ENCODE measurements at regions of chr20 and their contacts with region 1.

Region 1: GRCh38 chr20:38073307-38074071 is 39.9 kb downstream of the RPRD1B start:
- DNase-seq: peak; percentile 98
- H3K4me3 ChIP-seq: no peak overlapping the region
- CTCF ChIP-seq: peak; percentile 78

Region 2: GRCh38 chr20:38127011-38127621 is 53.6 kb after region 1 on chr20:
- in situ Hi-C with region 1: loop called (anchors 5 kb)
- DNase-seq: peak; percentile 55
- H3K4me3 ChIP-seq: no peak overlapping the region
- CTCF ChIP-seq: no peak

Region 3: GRCh38 chr20:38165089-38165989 is 91.8 kb after region 1 on chr20 and contains the start of gene TGM2:
- in situ Hi-C with region 1: loop called (anchors 5 kb)
- DNase-seq: no peak
- H3K4me3 ChIP-seq: peak within 1 kb of the TSS; percentile 51
- CTCF ChIP-seq: peak; percentile 76

Measured in astrocyte of the cerebellum (primary cell).